GM10248 (cell line): ENCODE measurements at regions of chr12 and their contacts with region 1.

Region 1: GRCh38 chr12:9895215-9895971 is 14.1 kb downstream of the KLRF2 start:
- DNase-seq: no peak
- CTCF ChIP-seq: no peak

Region 2: GRCh38 chr12:9906873-9907272 is 11.5 kb after region 1 on chr12:
- CTCF ChIA-PET with region 1: interaction called, 19 read pairs
- POLR2A ChIA-PET with region 1: no interaction called
- DNase-seq: no peak
- CTCF ChIP-seq: no peak

Region 3: GRCh38 chr12:9919443-9919842 is 24.1 kb after region 1 on chr12:
- CTCF ChIA-PET with region 1: no interaction called
- POLR2A ChIA-PET with region 1: no interaction called
- DNase-seq: no peak
- CTCF ChIP-seq: no peak